Lower lobe of right lung (tissue), 2 donors: ENCODE measurements at regions of chrX and their contacts with region 1.

Region 1: GRCh38 chrX:43357741-43358140 is 298.4 kb upstream of the MAOA start:
- DNase-seq: no peak
- ATAC-seq: no peak
- H3K4me3 ChIP-seq: no peak overlapping the region
- H3K27ac ChIP-seq: no peak overlapping the region
- H3K4me1 ChIP-seq: no peaks in the 10 kb centered on the region
- H3K27me3 ChIP-seq: no peaks in the 10 kb centered on the region
- CTCF ChIP-seq: no peak

Region 2: GRCh38 chrX:43557792-43558191 is 200.1 kb after region 1 on chrX:
- intact Hi-C with region 1: loop called (anchors 10 kb)
- DNase-seq: peak; percentile 41
- ATAC-seq: peak in 1 of 2 donors; percentile 65
- H3K4me3 ChIP-seq: no peak overlapping the region
- H3K27ac ChIP-seq: no peak overlapping the region
- H3K4me1 ChIP-seq: no peaks in the 10 kb centered on the region
- H3K27me3 ChIP-seq: no peaks in the 10 kb centered on the region
- CTCF ChIP-seq: peak; percentile 54